ENCODE measurements at regions of chr15 and their contacts with region 1.

Region 1: DNA sequence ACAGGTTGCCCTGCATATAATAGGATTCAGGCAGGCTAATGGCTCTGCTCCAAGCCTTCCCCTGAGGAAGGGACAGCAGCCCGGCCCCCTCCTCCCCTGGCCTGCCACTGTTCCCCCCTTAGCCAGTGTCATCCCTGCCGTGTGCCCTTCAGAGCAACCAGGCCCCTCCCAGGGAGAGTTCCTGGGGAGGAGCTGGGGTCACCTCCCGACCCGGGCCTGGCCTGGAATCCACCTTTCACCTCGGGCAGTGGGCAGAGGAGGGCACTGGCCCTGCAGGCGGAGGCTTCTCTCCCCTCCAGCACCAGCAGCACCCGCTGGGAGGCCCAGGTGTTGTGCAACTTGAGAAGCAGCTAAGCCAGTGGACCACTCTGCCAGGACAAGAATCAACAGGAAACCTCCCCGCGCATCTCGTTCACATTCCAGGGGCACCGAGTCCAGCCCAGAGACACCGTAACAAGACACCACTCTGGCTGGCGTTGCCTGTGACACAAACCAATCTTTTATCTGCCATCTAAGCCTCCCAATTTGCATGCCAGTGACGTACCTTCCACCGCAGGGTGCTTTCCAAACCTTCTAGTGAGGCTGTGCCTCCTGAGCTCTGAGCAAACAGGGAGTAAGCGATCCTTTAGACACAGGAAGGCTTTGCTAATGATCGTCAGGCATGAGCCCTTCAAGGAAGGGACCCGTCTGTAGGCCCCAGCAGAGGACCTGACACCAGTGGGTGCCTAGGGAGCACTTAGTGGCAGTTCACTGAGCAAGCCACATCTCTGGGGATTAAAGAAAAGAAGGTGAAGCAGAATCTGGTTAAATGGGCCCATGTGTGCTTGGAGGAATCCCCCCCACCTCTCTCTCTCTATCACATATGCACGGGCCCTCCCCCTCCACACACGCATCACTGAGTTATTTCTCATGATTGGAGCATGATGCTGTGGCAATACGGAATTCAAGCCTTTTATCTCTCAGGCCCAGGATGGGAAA is 98.9 kb upstream of the TLE3 start:
- DNase-seq: peak; percentile 89
- ATAC-seq: peak; percentile 76
- H3K4me3 ChIP-seq: peak overlapping the region; percentile 24 to 66 (median 28); a peak in 5 of 6 replicates
- H3K27ac ChIP-seq: peak overlapping the region; percentile 83
- H3K4me1 ChIP-seq: peaks cover 72% of the 10 kb centered on the region
- H3K27me3 ChIP-seq: peaks cover 4 to 12% of the 10 kb centered on the region in 2 experiments; a peak in 3 of 5 replicates
- CTCF ChIP-seq: no peak
- EP300 ChIP-seq: peak in 1 of 2 experiments; percentile 33; a peak in 1 of 4 replicates
- POLR2A ChIP-seq: no peak
- RAD21 ChIP-seq: no peak

Region 2: GRCh38 chr15:70121624-70122297 is 74.8 kb before region 1 on chr15:
- CTCF ChIA-PET with region 1: no interaction called
- POLR2A ChIA-PET with region 1: no interaction called
- in situ Hi-C with region 1: no loop called
- intact Hi-C with region 1: loop called (anchors 10 kb)
- DNase-seq: no peak
- ATAC-seq: 0 out of 3 replicates have a peak, but pooled peaks have one; percentile 24
- H3K4me3 ChIP-seq: no peak overlapping the region
- H3K27ac ChIP-seq: no peak overlapping the region
- H3K4me1 ChIP-seq: peaks cover 20% of the 10 kb centered on the region
- H3K27me3 ChIP-seq: peaks cover 2 to 61% of the 10 kb centered on the region in 2 experiments; a peak in 4 of 5 replicates
- CTCF ChIP-seq: no peak
- EP300 ChIP-seq: no peak
- POLR2A ChIP-seq: no peak
- RAD21 ChIP-seq: no peak